B cell (primary cell): ENCODE measurements at regions of chr3 and their contacts with region 1.

Region 1: DNA sequence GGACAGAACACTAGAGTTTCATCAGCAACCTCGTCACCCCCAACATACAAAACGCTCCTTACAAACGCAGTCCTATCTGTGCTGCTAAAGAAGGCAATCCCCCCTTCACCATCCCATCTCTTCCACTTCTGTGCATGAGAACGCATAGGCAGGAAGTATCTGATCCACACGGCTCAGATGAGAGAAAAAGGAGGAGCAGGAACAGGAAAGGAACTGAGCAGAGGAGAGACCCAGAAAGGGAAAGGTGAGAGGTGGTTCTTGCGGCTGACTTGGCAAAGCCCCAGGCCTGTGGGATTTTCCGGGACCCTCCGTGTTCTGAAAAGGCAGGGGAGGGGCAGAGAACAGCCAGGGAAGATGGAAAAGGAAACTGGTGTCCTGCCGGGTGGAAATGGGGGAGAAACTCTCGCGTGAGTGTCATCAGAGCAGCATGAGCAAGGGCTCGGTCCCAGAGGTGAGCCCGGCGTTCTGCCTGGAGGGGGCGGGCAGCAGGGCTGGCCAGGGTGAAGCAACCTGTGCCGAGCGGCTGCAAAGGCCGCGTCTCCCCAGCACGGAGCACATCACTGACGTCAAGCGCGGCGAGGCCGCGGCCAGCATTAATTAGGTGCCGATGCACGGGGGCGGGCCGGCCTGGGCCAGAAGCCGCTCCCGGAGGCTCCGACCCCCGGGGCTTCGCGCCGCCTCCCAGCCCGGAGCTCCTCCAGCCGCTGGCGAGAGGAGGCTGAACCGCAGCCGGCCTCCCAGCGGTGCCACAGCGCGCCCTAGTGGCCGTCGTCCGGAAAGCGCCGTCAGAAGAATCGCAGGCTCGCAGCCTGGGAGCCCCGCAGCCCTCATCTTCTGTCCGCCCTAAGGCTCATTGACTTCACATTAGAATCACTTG is 35.8 kb downstream of the CPN2 start:
- DNase-seq: peak; percentile 92
- ATAC-seq: peak; percentile 85
- H3K4me3 ChIP-seq: peak overlapping the region; percentile 17 to 72 (median 50)
- H3K4me3 Mint-ChIP-seq: peak overlapping the region; percentile 80
- H3K27ac ChIP-seq: no peak overlapping the region
- H3K27ac Mint-ChIP-seq: peak overlapping the region; percentile 37
- H3K4me1 ChIP-seq: peaks cover 24 to 25% of the 10 kb centered on the region in 2 donors
- H3K4me1 Mint-ChIP-seq: peaks cover 28% of the 10 kb centered on the region
- H3K27me3 ChIP-seq: peaks cover 0 to 74% (median 30%) of the 10 kb centered on the region in 4 experiments
- H3K27me3 Mint-ChIP-seq: peaks cover 57% of the 10 kb centered on the region
- CTCF ChIP-seq: peak; percentile 98

Region 2: GRCh38 chr3:193665370-193665989 is 649.8 kb before region 1 on chr3:
- CTCF ChIA-PET with region 1: interaction called, 193 read pairs
- POLR2A ChIA-PET with region 1: no interaction called
- intact Hi-C with region 1: loop called (anchors 1 kb)
- DNase-seq: peak; percentile 60
- ATAC-seq: no peak
- H3K4me3 ChIP-seq: no peak overlapping the region
- H3K4me3 Mint-ChIP-seq: no peak overlapping the region
- H3K27ac ChIP-seq: no peak overlapping the region
- H3K27ac Mint-ChIP-seq: no peak overlapping the region
- H3K4me1 ChIP-seq: no peaks in the 10 kb centered on the region
- H3K4me1 Mint-ChIP-seq: peaks cover 7% of the 10 kb centered on the region
- H3K27me3 ChIP-seq: no peaks in the 10 kb centered on the region
- H3K27me3 Mint-ChIP-seq: no peaks in the 10 kb centered on the region
- CTCF ChIP-seq: peak; percentile 86

Region 3: DNA sequence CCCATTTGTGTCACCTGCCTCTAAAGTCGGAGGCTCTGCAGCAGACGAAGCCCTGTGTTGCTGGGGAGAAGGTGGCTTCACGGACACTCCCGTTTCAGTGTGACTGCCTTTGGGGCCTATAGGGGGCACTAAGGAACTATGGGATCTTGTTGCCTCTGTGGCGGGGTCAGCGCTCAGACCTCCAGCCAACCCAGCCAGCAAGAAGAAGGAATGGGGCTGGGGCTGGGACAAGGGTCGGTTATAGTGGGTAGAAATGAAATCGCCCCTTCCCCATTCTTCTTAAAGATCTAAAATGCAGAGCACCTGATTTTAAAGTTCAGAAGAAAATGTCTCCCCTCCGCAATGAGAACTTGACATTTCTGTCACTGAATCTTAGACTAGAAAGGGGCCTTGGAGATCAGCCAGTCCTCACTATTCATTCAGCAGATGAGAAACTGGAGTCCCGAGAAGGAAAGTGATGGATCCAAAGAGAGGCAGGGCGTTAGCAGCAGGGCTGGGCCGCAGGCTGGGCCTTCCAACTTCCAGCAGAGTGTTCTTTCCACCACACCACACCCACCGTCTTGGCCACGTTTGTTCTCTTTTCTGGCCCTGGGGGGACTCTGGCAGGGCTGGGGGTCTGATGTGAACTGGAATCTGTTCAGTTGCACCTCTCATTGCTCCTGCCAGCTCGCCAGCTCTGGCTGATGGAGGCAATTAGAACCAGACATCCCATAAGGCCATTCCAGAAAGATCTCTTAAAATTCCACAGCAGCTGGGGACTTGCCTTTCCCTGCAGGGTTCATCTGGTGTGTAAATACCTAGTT is 526.9 kb before region 1 on chr3:
- CTCF ChIA-PET with region 1: interaction called, 157 read pairs
- POLR2A ChIA-PET with region 1: no interaction called
- intact Hi-C with region 1: loop called (anchors 2 kb)
- DNase-seq: peak; percentile 79
- ATAC-seq: peak; percentile 88
- H3K4me3 ChIP-seq: no peak overlapping the region
- H3K4me3 Mint-ChIP-seq: no peak overlapping the region
- H3K27ac ChIP-seq: no peak overlapping the region
- H3K27ac Mint-ChIP-seq: peak overlapping the region; percentile 57
- H3K4me1 ChIP-seq: peaks cover 12 to 17% of the 10 kb centered on the region in 2 donors
- H3K4me1 Mint-ChIP-seq: peaks cover 14% of the 10 kb centered on the region
- H3K27me3 ChIP-seq: peaks cover 0 to 44% (median 5%) of the 10 kb centered on the region in 4 experiments
- H3K27me3 Mint-ChIP-seq: peaks cover 54% of the 10 kb centered on the region
- CTCF ChIP-seq: peak; percentile 82

Region 4: GRCh38 chr3:194103983-194104751 is 211.2 kb before region 1 on chr3:
- CTCF ChIA-PET with region 1: interaction called, 16 read pairs
- POLR2A ChIA-PET with region 1: no interaction called
- intact Hi-C with region 1: no loop called
- DNase-seq: peak; percentile 94
- ATAC-seq: peak; percentile 88
- H3K4me3 ChIP-seq: peak overlapping the region; percentile 10 to 63 (median 42)
- H3K4me3 Mint-ChIP-seq: peak overlapping the region; percentile 81
- H3K27ac ChIP-seq: peak overlapping the region; percentile 93 to 97
- H3K27ac Mint-ChIP-seq: peak overlapping the region; percentile 81
- H3K4me1 ChIP-seq: peaks cover 85 to 93% of the 10 kb centered on the region in 2 donors
- H3K4me1 Mint-ChIP-seq: peaks cover 88% of the 10 kb centered on the region
- H3K27me3 ChIP-seq: no peaks in the 10 kb centered on the region
- H3K27me3 Mint-ChIP-seq: no peaks in the 10 kb centered on the region
- CTCF ChIP-seq: no peak

Region 5: GRCh38 chr3:194296454-194297263 is 18.7 kb before region 1 on chr3:
- CTCF ChIA-PET with region 1: interaction called, 12 read pairs
- POLR2A ChIA-PET with region 1: no interaction called
- intact Hi-C with region 1: no loop called
- DNase-seq: no peak
- ATAC-seq: no peak
- H3K4me3 ChIP-seq: no peak overlapping the region
- H3K4me3 Mint-ChIP-seq: no peak overlapping the region
- H3K27ac ChIP-seq: no peak overlapping the region
- H3K27ac Mint-ChIP-seq: no peak overlapping the region
- H3K4me1 ChIP-seq: peaks cover 22 to 37% of the 10 kb centered on the region in 2 donors
- H3K4me1 Mint-ChIP-seq: peaks cover 23% of the 10 kb centered on the region
- H3K27me3 ChIP-seq: peaks cover 0 to 17% (median 5%) of the 10 kb centered on the region in 4 experiments
- H3K27me3 Mint-ChIP-seq: peaks cover 13% of the 10 kb centered on the region
- CTCF ChIP-seq: no peak